GM12878 (cell line): ENCODE measurements at regions of chrX and their contacts with region 1.

Region 1: GRCh38 chrX:13005661-13006473 is 31.0 kb downstream of the TMSB4X start:
- DNase-seq: peak; percentile 89
- ATAC-seq: peak; percentile 55
- H3K4me3 ChIP-seq: peak overlapping the region; percentile 28; the same call in 1 of the 2 replicates
- H3K27ac ChIP-seq: peak overlapping the region; percentile 91
- H3K4me1 ChIP-seq: peaks cover 83% of the 10 kb centered on the region
- H3K27me3 ChIP-seq: no peaks in the 10 kb centered on the region
- CTCF ChIP-seq: no peak
- EP300 ChIP-seq: peak; percentile 96
- POLR2A ChIP-seq: no peak
- RAD21 ChIP-seq: no peak; the same call in 1 of the 2 replicates

Region 2: DNA sequence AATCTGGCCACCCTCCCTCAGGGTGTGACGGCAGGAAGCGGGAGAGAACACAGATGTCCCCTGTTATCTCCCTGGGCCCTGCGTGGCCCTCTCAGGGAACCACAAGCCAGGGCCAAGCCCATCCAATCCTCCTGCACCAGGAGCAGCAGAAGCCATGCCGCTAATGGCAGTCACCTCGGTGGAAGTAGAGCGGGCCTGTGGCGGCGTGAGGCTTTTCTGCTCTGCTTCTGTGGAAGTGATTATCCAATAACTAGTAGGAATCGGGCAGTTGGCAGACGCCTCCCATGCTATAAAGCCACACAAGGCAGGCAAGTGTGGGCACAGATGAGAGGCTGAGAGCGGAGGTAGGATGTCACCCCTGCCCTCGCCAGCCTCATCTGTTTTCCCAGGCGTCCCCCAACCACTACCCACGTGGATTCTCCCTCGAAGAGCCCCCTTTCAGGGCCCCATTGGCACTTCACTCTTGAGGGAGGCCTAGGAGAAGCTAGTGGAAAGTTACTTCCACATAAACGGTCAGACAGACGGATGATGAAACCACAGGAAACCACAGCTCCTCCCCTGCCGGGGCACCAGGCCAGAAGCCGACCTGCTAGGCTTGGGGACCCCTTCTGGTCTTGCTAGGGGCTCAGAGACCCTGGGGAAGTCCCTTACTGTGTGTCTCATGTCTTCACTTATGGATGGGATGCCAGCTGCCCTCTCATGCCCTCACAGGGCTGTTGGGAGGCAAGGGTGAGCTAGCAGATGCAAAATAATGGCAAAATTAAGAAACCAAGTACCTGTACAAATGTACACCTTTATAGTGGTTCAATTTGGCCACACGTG is 49.8 kb before region 1 on chrX:
- CTCF ChIA-PET with region 1: interaction called, 123 read pairs
- POLR2A ChIA-PET with region 1: interaction called, 17 read pairs
- RAD21 ChIA-PET with region 1: interaction called, 80 read pairs
- SMC1A ChIA-PET with region 1: interaction called, 409 read pairs
- in situ Hi-C with region 1: no loop called
- intact Hi-C with region 1: no loop called
- DNase-seq: peak; percentile 77
- ATAC-seq: peak; percentile 59
- H3K4me3 ChIP-seq: peak overlapping the region; percentile 32
- H3K27ac ChIP-seq: peak overlapping the region; percentile 99
- H3K4me1 ChIP-seq: peaks cover 42% of the 10 kb centered on the region
- H3K27me3 ChIP-seq: no peaks in the 10 kb centered on the region
- CTCF ChIP-seq: no peak
- EP300 ChIP-seq: peak; percentile 48 to 62; a peak in 2 of 4 replicates
- POLR2A ChIP-seq: peak; percentile 30
- RAD21 ChIP-seq: no peak

Region 3: DNA sequence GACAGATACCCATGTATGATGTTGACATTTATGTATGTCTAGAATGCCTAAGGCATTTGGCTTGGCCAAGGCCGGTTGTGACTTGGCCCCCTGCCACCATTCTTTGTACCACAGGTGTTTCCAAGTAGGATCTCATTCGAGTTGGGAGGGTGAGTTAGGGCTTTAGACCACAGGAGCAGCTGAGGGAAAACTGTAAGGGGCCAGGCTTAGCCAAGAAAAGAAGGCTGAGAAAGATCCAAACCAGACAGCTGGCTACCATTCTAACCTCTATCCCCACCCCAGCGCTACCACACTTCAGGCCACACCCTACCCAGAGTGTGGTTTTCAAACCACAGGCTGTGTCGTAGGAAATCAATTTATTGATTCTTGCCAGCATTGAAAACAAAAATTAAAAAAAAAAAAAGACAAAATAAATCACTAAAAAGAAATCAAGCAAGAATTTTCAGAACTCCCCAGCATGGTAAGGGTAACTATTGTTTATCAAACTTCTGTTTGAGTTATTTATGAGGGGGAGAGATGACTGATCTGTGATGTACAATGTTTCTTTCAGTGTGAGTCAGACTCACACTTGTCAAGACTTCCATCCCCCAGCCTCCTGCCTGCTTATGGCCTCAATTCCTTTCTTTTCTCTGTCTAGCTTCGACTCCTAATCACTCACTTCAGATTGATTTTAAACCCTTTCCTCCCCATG is 21.1 kb before region 1 on chrX:
- CTCF ChIA-PET with region 1: interaction called, 35 read pairs
- POLR2A ChIA-PET with region 1: interaction called, 157 read pairs
- RAD21 ChIA-PET with region 1: interaction called, 525 read pairs
- SMC1A ChIA-PET with region 1: interaction called, 595 read pairs
- in situ Hi-C with region 1: no loop called
- intact Hi-C with region 1: no loop called
- DNase-seq: no peak
- ATAC-seq: peak; percentile 74
- H3K4me3 ChIP-seq: peak overlapping the region; percentile 26; the same call in 1 of the 2 replicates
- H3K27ac ChIP-seq: peak overlapping the region; percentile 98
- H3K4me1 ChIP-seq: peaks cover 68% of the 10 kb centered on the region
- H3K27me3 ChIP-seq: no peaks in the 10 kb centered on the region
- CTCF ChIP-seq: no peak
- EP300 ChIP-seq: peak; percentile 68 to 87; a peak in 3 of 4 replicates
- POLR2A ChIP-seq: no peak
- RAD21 ChIP-seq: no peak; the same call in 1 of the 2 replicates

Region 4: GRCh38 chrX:13022926-13023325 is 17.1 kb after region 1 on chrX:
- CTCF ChIA-PET with region 1: interaction called, 15 read pairs
- POLR2A ChIA-PET with region 1: interaction called, 25 read pairs
- RAD21 ChIA-PET with region 1: interaction called, 81 read pairs
- SMC1A ChIA-PET with region 1: interaction called, 189 read pairs
- in situ Hi-C with region 1: no loop called
- intact Hi-C with region 1: no loop called
- DNase-seq: no peak
- ATAC-seq: peak; percentile 91
- H3K4me3 ChIP-seq: no peak overlapping the region
- H3K27ac ChIP-seq: peak overlapping the region; percentile 47
- H3K4me1 ChIP-seq: peaks cover 43% of the 10 kb centered on the region
- H3K27me3 ChIP-seq: no peaks in the 10 kb centered on the region
- CTCF ChIP-seq: no peak
- EP300 ChIP-seq: peak in 1 of 2 experiments; percentile 75; a peak in 2 of 4 replicates
- POLR2A ChIP-seq: no peak
- RAD21 ChIP-seq: no peak

Region 5: GRCh38 chrX:13078739-13079444 is 73.0 kb after region 1 on chrX:
- CTCF ChIA-PET with region 1: interaction called, 17 read pairs
- POLR2A ChIA-PET with region 1: interaction called, 280 read pairs
- RAD21 ChIA-PET with region 1: interaction called, 689 read pairs
- SMC1A ChIA-PET with region 1: interaction called, 847 read pairs
- in situ Hi-C with region 1: no loop called
- intact Hi-C with region 1: no loop called
- DNase-seq: no peak
- ATAC-seq: no peak
- H3K4me3 ChIP-seq: no peak overlapping the region
- H3K27ac ChIP-seq: peak overlapping the region; percentile 81
- H3K4me1 ChIP-seq: peaks cover 94% of the 10 kb centered on the region
- H3K27me3 ChIP-seq: no peaks in the 10 kb centered on the region
- CTCF ChIP-seq: no peak
- EP300 ChIP-seq: no peak
- POLR2A ChIP-seq: no peak
- RAD21 ChIP-seq: no peak

Region 6: DNA sequence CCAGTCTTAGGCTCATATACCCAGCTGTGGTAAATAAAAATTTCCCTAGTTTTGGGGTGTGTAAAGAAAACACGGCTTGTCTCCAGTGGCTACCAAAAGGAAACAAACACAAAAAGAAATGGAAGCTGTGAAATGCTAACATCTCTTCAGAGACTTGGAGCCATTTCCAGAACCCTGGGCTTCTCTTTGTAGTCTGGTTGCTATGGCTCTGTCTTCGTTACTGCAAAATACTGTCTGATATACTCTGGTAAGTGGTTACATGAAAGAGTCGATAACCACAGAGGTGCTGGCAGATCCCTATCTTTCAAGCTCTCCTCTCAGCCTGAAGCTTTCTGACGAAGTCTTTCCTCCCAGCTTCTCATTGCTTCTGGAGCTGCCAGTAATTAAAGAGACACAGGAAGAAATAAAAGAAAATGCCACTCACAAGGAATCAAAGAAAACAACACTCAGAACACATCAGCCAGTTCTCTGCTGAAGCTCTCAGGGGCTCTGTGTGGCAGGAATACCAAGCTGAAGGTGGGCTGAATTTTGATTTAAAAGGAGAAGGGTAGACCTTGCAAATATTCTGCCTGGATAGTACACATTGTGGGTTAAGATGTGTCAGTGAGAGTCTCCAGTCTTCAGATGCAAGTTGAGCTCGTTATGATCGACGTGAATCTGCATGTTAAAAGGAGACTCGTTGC is 146.1 kb after region 1 on chrX:
- CTCF ChIA-PET with region 1: no interaction called
- POLR2A ChIA-PET with region 1: no interaction called
- RAD21 ChIA-PET with region 1: no interaction called
- SMC1A ChIA-PET with region 1: no interaction called
- in situ Hi-C with region 1: no loop called
- intact Hi-C with region 1: no loop called
- DNase-seq: no peak
- ATAC-seq: no peak
- H3K4me3 ChIP-seq: no peak overlapping the region
- H3K27ac ChIP-seq: no peak overlapping the region
- H3K4me1 ChIP-seq: no peaks in the 10 kb centered on the region
- H3K27me3 ChIP-seq: no peaks in the 10 kb centered on the region
- CTCF ChIP-seq: no peak
- EP300 ChIP-seq: no peak
- POLR2A ChIP-seq: no peak
- RAD21 ChIP-seq: no peak